Caco-2 (cell line): ENCODE measurements at regions of chrX and their contacts with region 1.

Region 1: GRCh38 chrX:30713061-30713525 is 59.9 kb downstream of the GK start:
- DNase-seq: peak; percentile 59 to 70
- H3K4me3 ChIP-seq: no peak overlapping the region
- H3K4me3 Mint-ChIP-seq: no peak overlapping the region
- H3K27ac Mint-ChIP-seq: no peak overlapping the region
- H3K4me1 ChIP-seq: no peaks in the 10 kb centered on the region
- H3K4me1 Mint-ChIP-seq: no peaks in the 10 kb centered on the region
- H3K27me3 ChIP-seq: no peaks in the 10 kb centered on the region
- H3K27me3 Mint-ChIP-seq: no peaks in the 10 kb centered on the region
- CTCF ChIP-seq: peak; percentile 48 to 78

Region 2: GRCh38 chrX:30635630-30636029 is 77.5 kb before region 1 on chrX:
- CTCF ChIA-PET with region 1: no interaction called
- POLR2A ChIA-PET with region 1: no interaction called
- intact Hi-C with region 1: loop called (anchors 1 kb)
- DNase-seq: no peak
- H3K4me3 ChIP-seq: no peak overlapping the region
- H3K4me3 Mint-ChIP-seq: no peak overlapping the region
- H3K27ac Mint-ChIP-seq: no peak overlapping the region
- H3K4me1 ChIP-seq: no peaks in the 10 kb centered on the region
- H3K4me1 Mint-ChIP-seq: no peaks in the 10 kb centered on the region
- H3K27me3 ChIP-seq: no peaks in the 10 kb centered on the region
- H3K27me3 Mint-ChIP-seq: no peaks in the 10 kb centered on the region
- CTCF ChIP-seq: peak in 1 of 2 experiments; percentile 8